Activated CD4-positive, alpha-beta T cell treated with anti-CD3 and anti-CD28 coated beads, Interleukin-2, amount 10 ng/mL, durations not matched to agents 24 days and 14 days (primary cell): ENCODE measurements at regions of chr1 and their contacts with region 1.

Region 1: GRCh38 chr1:100037927-100038659 is 68.3 kb downstream of the SLC35A3 start:
- DNase-seq: peak; percentile 97
- H3K4me3 Mint-ChIP-seq: peak overlapping the region; percentile 94
- H3K27ac Mint-ChIP-seq: peak overlapping the region; percentile 95
- H3K4me1 Mint-ChIP-seq: peaks cover 44% of the 10 kb centered on the region
- H3K27me3 Mint-ChIP-seq: no peaks in the 10 kb centered on the region

Region 2: DNA sequence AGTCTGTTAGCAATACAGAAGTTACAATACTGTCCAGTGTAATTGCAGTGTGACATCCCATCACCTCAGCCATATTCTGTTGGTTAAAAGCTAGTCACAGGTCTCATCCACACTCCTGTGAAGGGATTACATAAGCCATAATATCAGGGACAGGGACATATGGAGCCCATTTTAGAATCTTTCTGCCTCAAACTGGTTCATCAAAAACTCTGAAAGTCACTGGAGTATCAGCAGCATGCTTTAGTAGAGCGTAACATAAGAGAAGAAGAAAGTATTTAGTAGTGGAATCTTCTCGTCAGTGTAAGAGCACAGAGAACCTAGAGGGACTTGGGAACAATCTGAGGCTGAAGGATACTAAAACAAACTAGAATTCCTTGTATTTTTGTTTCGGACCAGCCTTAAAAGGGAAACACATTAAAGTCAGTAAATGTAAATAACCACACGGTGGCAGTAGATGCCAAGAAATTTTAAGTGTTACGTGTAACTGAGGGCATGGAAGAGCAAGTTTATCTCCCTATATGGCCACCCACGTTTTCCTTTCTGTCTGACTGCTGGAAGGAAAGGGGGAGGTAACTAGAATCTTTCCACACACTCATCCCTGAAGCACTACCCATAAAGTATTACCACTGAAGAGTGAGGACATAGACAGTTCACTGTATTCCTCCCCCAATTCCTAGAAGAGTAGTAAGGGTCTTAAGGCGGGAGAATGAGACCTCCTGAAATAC is 229.5 kb before region 1 on chr1:
- intact Hi-C with region 1: loop called (anchors 1 kb)
- DNase-seq: peak; percentile 85
- H3K4me3 Mint-ChIP-seq: peak overlapping the region; percentile 22
- H3K27ac Mint-ChIP-seq: no peak overlapping the region
- H3K4me1 Mint-ChIP-seq: peaks cover 18% of the 10 kb centered on the region
- H3K27me3 Mint-ChIP-seq: peaks cover 20% of the 10 kb centered on the region

Region 3: DNA sequence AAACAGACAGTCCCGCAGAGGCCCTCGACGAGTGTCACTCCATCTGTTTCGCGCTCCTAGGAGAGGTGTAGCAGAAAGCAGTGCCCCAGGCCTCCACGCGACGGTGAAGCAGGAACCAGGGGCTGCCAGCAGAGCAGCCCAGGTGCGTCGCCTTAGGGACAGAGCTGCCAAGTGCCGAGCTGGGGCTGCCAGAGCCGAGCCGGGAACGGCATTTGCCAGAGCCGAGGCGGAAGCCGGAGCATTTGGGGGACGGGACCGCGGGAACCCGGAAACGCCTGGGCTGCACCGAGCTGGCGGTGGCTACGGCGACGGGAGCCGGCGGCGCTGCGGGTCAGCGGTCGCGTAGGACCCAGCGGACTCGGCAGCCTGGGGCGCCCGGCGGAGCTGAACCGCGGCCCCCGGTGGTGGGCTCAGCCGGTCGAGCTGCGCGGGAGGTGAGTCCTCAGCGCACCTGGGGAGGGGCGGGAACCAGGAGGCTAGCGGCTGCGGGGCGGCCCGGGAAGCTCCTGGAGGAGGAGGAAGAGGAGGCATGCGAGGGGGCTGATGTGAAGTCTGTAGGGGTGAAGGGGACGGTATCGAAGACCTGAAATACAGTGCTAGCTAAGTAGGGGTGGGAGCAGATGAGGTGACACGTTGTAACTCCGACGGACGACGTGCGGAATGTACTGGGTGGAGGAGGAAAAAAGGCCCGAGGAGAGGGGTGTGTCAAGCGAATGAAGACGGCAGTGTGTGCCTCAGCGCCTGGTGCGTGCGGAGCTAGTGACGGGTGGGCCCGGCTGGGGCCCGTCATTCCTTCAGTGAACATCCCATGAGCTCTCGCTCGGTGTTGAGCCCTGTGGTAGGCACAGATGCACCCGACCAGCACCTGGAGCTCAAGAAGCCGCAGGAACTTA is 68.1 kb before region 1 on chr1 and contains the start of gene SLC35A3:
- intact Hi-C with region 1: loop called (anchors 1 kb)
- DNase-seq: peak; percentile 94
- H3K4me3 Mint-ChIP-seq: peak within 1 kb of the TSS; percentile 97
- H3K27ac Mint-ChIP-seq: peak within 1 kb of the TSS; percentile 98
- H3K4me1 Mint-ChIP-seq: peaks cover 16% of the 10 kb centered on the region
- H3K27me3 Mint-ChIP-seq: no peaks in the 10 kb centered on the region
- total RNA-seq, gene SLC35A3: 15.7 and 17.4 TPM in 2 replicates

Region 4: GRCh38 chr1:100009458-100009857 is 28.6 kb before region 1 on chr1:
- intact Hi-C with region 1: no loop called
- DNase-seq: no peak
- H3K4me3 Mint-ChIP-seq: no peak overlapping the region
- H3K27ac Mint-ChIP-seq: no peak overlapping the region
- H3K4me1 Mint-ChIP-seq: no peaks in the 10 kb centered on the region
- H3K27me3 Mint-ChIP-seq: no peaks in the 10 kb centered on the region

Region 5: DNA sequence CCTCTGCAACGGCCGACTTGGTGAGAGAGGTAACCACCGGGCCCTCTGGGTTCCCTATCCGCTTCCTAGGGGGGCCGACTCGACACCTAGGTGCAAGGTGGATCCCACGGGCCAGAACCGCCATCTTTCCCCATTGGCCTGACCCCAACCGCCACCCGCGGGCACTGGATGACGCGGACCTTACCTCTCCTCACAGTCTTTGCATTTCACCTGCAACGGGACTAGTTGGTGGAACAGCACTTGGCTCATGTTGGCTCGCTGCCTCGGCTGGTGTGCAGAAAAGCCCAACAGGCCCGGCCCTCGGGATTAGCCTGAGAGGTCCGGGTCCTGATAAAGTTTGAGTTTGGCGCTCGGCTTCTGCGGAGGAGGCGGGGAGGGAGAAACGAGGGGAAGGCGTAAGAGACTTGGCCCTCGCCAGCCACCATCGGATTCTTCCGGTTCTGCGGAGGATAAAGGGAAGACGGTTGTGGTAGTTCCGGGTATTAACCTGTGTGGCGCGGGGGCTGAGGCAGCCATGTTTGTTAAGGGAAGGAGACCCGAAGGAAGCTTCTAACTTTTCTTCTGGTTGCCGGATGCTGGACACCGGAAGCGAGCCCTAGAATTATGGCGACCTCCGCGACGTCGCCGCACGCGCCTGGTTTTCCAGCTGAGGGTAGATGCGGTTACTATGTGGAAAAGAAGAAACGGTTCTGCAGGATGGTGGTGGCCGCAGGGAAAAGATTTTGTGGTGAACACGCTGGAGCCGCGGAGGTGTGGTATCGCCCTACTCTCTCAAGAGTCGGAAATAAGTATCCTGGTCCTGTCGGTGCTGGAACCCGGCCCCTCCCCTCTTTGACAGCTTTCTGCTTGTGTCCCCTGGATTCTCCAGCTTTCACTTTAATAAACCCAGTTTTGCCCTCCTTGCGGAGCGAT is 94.7 kb after region 1 on chr1 and contains the starts of genes SASS6 and TRMT13:
- intact Hi-C with region 1: loop called (anchors 1 kb)
- DNase-seq: peak; percentile 98
- H3K4me3 Mint-ChIP-seq: peak within 1 kb of the TSS; percentile 100
- H3K27ac Mint-ChIP-seq: peak within 1 kb of the TSS; percentile 97
- H3K4me1 Mint-ChIP-seq: peaks cover 38% of the 10 kb centered on the region
- H3K27me3 Mint-ChIP-seq: peaks cover 3% of the 10 kb centered on the region
- total RNA-seq, gene SASS6: 16.0 and 17.2 TPM in 2 replicates
- total RNA-seq, gene TRMT13: 24.3 and 25.5 TPM in 2 replicates

Region 6: DNA sequence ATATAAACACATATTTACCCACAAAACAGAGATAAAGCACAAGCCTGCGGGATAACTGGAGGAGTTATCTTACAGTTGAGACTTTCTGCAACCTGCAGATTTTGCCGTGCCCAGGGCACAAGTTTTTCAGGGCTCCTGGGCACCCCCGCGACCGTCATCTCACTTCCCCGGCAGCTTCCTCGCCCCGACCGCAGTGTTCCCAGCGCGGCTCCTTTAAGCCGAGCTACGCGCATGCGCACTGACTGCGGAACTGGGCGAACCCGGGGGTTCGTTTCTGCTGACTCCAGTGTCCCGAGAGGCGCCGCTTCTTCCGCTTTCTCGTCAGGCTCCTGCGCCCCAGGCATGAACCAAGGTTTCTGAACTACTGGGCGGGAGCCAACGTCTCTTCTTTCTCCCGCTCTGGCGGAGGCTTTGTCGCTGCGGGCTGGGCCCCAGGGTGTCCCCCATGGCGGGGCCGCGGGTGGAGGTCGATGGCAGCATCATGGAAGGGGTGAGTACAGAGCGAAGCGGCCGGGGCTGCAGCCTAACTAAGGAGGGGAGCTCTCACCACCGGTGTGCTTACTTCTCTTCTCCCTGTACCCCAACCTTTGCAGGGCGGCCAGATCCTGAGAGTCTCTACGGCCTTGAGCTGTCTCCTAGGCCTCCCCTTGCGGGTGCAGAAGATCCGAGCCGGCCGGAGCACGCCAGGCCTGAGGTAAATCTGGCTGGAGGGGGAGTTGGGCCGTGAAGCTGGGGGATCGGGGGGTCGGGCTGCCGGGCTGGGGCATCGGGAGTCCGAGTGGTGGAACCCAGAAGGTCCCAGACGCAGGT is 228.0 kb after region 1 on chr1 and contains the start of gene RTCA:
- intact Hi-C with region 1: loop called (anchors 1 kb)
- DNase-seq: peak; percentile 99
- H3K4me3 Mint-ChIP-seq: peak within 1 kb of the TSS; percentile 98
- H3K27ac Mint-ChIP-seq: peak within 1 kb of the TSS; percentile 96
- H3K4me1 Mint-ChIP-seq: peaks cover 34% of the 10 kb centered on the region
- H3K27me3 Mint-ChIP-seq: no peaks in the 10 kb centered on the region
- total RNA-seq, gene RTCA: 48.5 and 49.1 TPM in 2 replicates

Region 7: DNA sequence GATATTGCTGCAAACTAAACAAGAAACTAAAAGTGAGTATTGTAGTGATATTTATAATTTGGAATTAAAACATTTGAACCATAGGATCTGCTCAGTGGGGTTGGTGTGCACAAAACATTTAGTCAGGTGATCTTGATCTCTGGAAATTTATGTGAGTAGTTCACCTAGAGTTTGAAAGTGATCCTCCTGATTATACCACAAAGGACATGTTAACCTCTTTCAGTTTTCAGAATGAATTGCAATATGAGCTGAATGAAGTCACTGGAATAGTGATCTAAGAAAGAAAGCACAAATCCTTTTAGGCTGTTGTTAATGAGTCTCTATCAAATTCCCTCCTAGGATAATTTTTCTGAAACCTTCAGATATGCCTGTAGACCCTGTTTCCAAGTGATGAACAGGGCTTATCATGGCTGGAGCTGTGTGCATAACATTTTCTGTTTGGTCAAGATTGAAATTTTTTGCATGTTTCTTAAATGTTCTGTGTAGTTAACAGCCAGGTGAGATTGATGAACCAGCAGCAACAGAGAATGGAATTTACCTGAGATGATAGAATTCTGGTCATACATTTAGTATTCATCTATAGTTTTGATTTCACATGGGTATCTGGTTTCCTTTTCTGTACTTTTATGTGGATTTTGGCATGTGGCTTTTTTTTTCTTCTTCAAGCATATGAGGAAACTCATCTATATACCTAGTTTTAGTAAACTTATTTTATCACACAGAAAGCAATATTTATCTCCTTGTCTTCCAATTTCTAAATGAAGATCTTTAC is 339.7 kb after region 1 on chr1:
- intact Hi-C with region 1: loop called (anchors 5 kb)
- DNase-seq: no peak
- H3K4me3 Mint-ChIP-seq: peak overlapping the region; percentile 61
- H3K27ac Mint-ChIP-seq: peak overlapping the region; percentile 88
- H3K4me1 Mint-ChIP-seq: peaks cover 36% of the 10 kb centered on the region
- H3K27me3 Mint-ChIP-seq: no peaks in the 10 kb centered on the region

Region 8: GRCh38 chr1:100895540-100896483 is 857.7 kb after region 1 on chr1 and contains the start of gene SLC30A7:
- intact Hi-C with region 1: loop called (anchors 10 kb)
- DNase-seq: peak; percentile 99
- H3K4me3 Mint-ChIP-seq: peak within 1 kb of the TSS; percentile 100
- H3K27ac Mint-ChIP-seq: peak within 1 kb of the TSS; percentile 100
- H3K4me1 Mint-ChIP-seq: peaks cover 36% of the 10 kb centered on the region
- H3K27me3 Mint-ChIP-seq: no peaks in the 10 kb centered on the region
- total RNA-seq, gene SLC30A7: 40.8 and 41.0 TPM in 2 replicates